ENCODE measurements at regions of chr16 and their contacts with region 1.

Region 1: DNA sequence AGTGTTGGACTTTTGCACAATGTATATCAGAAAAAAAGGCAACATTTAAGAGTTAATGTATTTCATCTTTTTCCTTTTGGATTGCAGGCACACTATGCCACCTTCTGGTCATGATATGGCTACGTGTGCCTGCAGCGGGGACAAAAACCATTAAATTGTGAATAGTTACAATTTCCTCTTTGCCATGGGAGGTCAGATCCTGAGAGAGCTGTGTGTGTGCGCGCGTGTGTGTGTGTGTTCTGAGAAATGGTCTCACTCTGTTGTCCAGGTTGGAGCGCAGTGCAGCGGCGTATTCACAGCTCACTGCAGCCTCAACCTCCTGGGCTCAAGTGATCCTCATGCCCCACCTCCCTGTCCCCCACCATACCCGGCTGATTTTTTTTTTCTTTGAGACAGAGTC is 4.3 kb upstream of the SGF29 start:
- H3K4me3 ChIP-seq: no peak overlapping the region
- H3K27ac ChIP-seq: no peak overlapping the region
- H3K4me1 ChIP-seq: peaks cover 1% of the 10 kb centered on the region; the same call in 1 of the 2 replicates
- CTCF ChIP-seq: peak; percentile 39; the same call in 1 of the 2 replicates

Region 2: GRCh38 chr16:28491374-28491969 is 57.9 kb before region 1 on chr16:
- CTCF ChIA-PET with region 1: no interaction called
- POLR2A ChIA-PET with region 1: interaction called, 11 read pairs
- H3K4me3 ChIP-seq: peak overlapping the region; percentile 84
- H3K27ac ChIP-seq: peak overlapping the region; percentile 75; the same call in 1 of the 2 replicates
- H3K4me1 ChIP-seq: no peaks in the 10 kb centered on the region
- CTCF ChIP-seq: peak; percentile 59; the same call in 1 of the 2 replicates